Right ventricle myocardium superior (tissue), 1 donor: ENCODE measurements at regions of chr18 and their contacts with region 1.

Region 1: DNA sequence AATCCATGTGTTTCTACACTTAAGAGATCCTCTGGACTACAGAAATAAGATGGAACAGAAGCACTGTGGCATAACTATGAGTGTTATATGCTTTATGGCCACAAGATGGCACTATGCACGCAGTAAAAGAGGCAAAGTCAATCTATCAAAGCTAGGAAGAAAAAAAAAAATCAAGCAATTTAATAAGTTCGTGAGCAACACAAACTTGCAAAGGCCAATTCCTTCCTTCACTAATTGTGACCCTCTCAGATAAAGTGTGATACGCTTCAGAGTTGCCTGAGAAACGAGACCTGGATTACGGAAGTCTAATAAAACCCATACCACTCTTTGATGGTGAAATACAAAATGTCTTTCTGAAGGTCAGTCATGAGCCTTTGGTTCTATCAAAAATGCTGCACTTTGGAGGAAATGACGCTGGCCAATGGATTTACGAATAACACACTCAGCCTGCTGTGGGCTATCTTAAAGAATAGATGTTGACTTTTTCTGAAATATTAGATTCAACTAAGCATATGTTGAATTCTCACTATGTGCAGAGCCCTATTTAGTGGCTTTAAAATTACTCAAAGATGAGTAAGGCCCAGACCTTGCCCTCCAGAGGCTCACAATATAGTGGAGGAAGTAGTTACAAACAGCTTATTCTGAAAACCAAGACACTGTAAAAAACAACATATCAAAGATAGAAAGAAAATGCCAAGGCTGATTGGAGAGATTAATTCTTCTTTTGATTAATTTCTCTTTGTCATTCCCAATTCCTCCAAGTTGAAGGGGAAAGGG is 35.5 kb upstream of the TTR start:
- DNase-seq: no peak
- ATAC-seq: peak; percentile 82

Region 2: GRCh38 chr18:31626409-31626808 is 70.2 kb after region 1 on chr18:
- intact Hi-C with region 1: loop called (anchors 2 kb)
- DNase-seq: no peak
- ATAC-seq: peak; percentile 66

Region 3: DNA sequence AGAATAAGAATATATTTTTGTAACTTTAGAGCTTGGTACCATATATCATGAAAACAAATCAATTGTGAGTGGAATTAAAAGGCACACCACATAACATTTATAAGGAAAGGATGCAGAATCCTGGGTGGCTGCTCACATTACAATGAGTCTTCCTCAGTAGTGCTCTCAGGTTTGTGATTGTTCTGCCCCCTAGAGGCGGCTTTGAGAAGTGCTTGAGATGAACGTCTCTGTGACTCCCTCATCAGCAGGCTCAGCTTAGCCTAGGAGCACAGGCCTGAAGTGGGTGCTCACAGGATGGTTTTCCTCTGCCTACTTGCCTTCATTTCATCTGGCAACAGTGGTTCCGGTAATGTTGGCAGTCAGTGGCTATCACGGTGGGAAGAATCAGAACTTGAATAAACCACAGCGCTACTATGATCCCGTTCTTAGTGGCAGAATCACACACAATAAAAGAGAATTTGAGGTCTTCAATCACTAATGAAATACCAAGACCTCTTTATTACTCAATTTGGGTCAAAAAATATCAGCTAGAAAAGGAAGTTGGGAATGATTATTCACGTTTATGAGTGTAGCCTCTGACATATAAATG is 166.3 kb after region 1 on chr18:
- intact Hi-C with region 1: loop called (anchors 5 kb)
- DNase-seq: peak; percentile 75
- ATAC-seq: peak; percentile 85

Region 4: DNA sequence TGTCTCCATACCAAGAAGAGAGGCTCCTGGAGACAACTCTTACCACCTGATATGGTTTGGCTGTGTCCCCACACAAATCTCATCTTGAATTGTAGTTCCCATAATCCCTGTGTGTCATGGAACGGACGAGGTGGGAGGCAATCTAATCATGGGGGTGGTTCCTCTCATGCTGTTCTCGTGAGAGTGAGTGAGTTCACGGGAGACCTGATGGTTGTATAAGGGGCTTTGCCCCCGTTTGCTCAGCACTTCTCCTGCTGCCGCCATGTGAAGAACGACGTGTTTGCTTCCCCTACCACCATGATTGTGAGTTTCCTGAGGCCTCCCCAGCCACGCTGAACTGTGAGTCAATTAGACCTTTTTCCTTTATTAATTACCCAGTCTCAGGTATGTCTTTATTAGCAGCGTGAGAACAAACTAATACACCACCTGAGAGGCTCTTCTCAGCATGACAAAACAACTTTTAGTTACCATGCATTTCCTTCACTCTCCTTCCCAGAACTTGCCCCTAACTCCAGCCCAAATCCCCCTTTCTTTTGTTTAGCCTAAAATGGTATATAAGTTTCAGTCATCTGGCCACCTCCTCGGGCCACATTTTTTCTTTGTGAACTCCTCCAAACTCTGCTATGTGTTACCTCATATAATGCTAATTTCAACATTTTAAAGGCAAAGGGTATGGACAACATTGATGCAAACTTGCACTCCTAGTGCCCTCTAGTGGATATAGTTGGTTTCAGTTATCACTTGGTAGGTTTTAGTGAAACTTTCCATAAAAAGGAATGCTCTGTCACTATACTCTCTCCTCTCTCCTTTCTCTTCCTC is 263.2 kb after region 1 on chr18:
- intact Hi-C with region 1: loop called (anchors 5 kb)
- DNase-seq: no peak
- ATAC-seq: peak; percentile 49